Heart left ventricle (tissue), 16 donors: ENCODE measurements at regions of chr9 and their contacts with region 1.

Region 1: DNA sequence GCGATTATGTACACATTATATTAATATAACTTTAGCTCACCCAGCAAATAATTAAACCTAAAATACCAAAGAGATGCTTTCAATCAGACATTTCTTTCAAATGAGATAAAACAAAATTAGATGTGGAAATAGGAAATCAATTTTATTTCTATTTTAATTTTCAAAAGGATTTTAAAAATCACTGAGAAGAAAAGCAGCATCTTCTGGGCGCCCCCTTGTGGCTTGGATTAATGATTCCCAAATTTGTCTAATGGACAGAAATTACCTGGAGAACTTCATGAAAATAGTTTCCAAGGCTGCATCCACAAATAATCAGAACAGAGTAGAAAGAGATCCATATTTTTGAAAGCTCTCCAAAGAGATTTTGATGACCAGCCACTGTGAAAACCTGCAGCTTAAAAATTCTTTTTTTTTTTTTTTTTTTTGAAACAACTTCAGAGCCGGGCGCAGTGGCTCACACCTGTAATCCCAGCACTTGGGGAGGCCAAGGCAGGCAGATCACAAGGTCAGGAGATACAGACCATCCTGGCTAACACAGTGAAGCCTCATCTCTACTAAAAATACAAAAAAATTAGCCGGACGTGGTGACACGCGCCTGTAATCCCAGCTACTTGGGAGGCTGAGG is 50.9 kb upstream of the CEMIP2 start:
- DNase-seq: peak in 2 of 5 donors; percentile 16 to 25
- ATAC-seq: no peak
- H3K4me3 ChIP-seq: no peak overlapping the region
- H3K27ac ChIP-seq: no peak overlapping the region
- H3K4me1 ChIP-seq: peaks cover 0 to 7% (median 0%) of the 10 kb centered on the region in 12 donors
- H3K27me3 ChIP-seq: no peaks in the 10 kb centered on the region
- CTCF ChIP-seq: peak; percentile 62 to 87 (median 78)
- POLR2A ChIP-seq: no peak

Region 2: DNA sequence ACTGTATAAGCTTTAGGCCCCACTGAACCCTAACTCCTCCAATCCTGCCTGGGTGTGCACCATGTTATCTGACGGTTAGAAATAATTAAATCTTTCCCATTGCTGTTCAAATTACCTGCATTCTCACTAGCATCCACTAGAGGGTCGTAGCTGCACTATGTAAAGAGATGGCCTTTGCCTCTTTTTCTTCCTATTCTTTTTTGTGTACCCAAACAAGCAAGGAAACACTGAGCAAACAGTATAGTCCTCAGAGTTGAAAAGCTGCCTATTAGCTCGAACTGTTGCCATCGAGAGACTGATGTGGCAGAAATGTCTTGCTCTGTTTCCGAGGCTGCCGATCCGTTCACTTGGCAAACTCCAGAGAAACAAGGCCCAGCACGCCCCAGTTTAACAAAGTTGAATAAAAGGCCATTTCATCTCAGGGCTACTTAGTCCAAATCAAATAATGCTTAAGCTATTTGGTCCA is 534.0 kb before region 1 on chr9:
- intact Hi-C with region 1: loop called in 5 of 10 experiments (anchors 5 to 10 kb)
- DNase-seq: peak in 2 of 5 donors; percentile 17 to 31
- ATAC-seq: peak; percentile 65 to 76 (median 72)
- H3K4me3 ChIP-seq: no peak overlapping the region
- H3K27ac ChIP-seq: no peak overlapping the region
- H3K4me1 ChIP-seq: peaks cover 0 to 5% (median 0%) of the 10 kb centered on the region in 12 donors
- H3K27me3 ChIP-seq: no peaks in the 10 kb centered on the region
- CTCF ChIP-seq: peak; percentile 72 to 91 (median 84)
- POLR2A ChIP-seq: no peak

Region 3: GRCh38 chr9:71878327-71879274 is 59.4 kb after region 1 on chr9:
- intact Hi-C with region 1: loop called in 1 of 10 experiments (anchors 10 kb)
- DNase-seq: no peak
- ATAC-seq: no peak
- H3K4me3 ChIP-seq: no peak overlapping the region
- H3K27ac ChIP-seq: no peak overlapping the region
- H3K4me1 ChIP-seq: peaks cover 0 to 10% (median 0%) of the 10 kb centered on the region in 12 donors
- H3K27me3 ChIP-seq: no peaks in the 10 kb centered on the region
- CTCF ChIP-seq: no peak
- POLR2A ChIP-seq: no peak

Region 4: DNA sequence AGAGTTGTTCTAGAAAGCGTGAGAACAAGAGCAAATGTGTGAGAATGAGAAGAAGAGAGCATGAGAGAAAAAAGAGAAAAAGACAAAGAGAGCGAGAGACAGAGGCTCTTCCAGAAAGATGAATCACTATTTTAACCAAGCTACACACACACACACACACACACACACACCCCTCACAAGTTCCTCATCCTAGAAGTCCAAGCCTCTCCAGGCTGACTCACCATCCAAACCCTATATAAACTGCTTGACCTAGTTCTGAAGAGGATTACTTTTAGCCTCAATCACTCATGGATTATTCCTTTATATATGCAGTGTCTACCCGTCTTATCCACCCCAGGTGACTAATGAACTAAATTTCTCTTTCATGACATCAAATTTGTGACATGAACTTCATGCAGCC is 203.6 kb after region 1 on chr9:
- intact Hi-C with region 1: loop called in 1 of 10 experiments (anchors 5 kb)
- DNase-seq: no peak
- ATAC-seq: no peak
- H3K4me3 ChIP-seq: no peak overlapping the region
- H3K27ac ChIP-seq: no peak overlapping the region
- H3K4me1 ChIP-seq: peaks cover 0 to 3% (median 0%) of the 10 kb centered on the region in 12 donors
- H3K27me3 ChIP-seq: no peaks in the 10 kb centered on the region
- CTCF ChIP-seq: no peak
- POLR2A ChIP-seq: no peak

Region 5: GRCh38 chr9:72220582-72220981 is 401.4 kb after region 1 on chr9:
- intact Hi-C with region 1: no loop called
- DNase-seq: no peak
- ATAC-seq: no peak
- H3K4me3 ChIP-seq: no peak overlapping the region
- H3K27ac ChIP-seq: no peak overlapping the region
- H3K4me1 ChIP-seq: no peaks in the 10 kb centered on the region
- H3K27me3 ChIP-seq: no peaks in the 10 kb centered on the region
- CTCF ChIP-seq: no peak
- POLR2A ChIP-seq: no peak